K562 (cell line): ENCODE measurements at regions of chr2 and their contacts with region 1.

Region 1: DNA sequence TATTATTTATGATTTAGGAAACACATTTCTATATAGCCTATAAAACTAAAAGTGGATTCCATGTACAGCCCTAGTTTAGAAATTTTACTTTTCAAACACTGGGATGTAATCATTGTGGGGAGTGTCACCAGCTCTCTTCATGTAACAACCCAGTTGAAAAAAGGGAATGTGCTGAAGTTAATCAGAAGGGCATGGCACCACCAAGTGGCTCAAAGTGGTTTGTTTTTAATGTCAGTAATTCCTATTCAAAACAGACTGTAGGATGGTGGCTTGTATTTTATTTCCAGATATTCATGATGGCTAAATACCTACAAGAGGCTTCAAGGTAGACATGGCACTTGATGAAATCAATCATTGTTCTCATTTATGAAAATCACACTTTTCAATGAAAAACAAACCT is 58.1 kb upstream of the TMEM182 start:
- DNase-seq: peak; percentile 23 to 58 (median 43)
- ATAC-seq: peak; percentile 94
- H3K4me3 ChIP-seq: no peak overlapping the region
- H3K27ac ChIP-seq: no peak overlapping the region
- H3K4me1 ChIP-seq: peaks cover 0 to 5% of the 10 kb centered on the region in 2 experiments; a peak in 2 of 5 replicates
- H3K27me3 ChIP-seq: no peaks in the 10 kb centered on the region
- CTCF ChIP-seq: peak; percentile 58 to 85 (median 66)
- EP300 ChIP-seq: no peak
- POLR2A ChIP-seq: no peak
- RAD21 ChIP-seq: peak; percentile 89 to 90

Region 2: GRCh38 chr2:102473020-102473419 is 230.7 kb before region 1 on chr2 and contains the start of gene SLC9A4:
- CTCF ChIA-PET with region 1: interaction called, 8 read pairs
- POLR2A ChIA-PET with region 1: no interaction called
- in situ Hi-C with region 1: loop called (anchors 10 kb)
- intact Hi-C with region 1: loop called (anchors 1 kb)
- DNase-seq: peak; percentile 25 to 60 (median 53)
- ATAC-seq: peak; percentile 72
- H3K4me3 ChIP-seq: no peak within 1 kb of the TSS
- H3K27ac ChIP-seq: no peak within 1 kb of the TSS
- H3K4me1 ChIP-seq: no peaks in the 10 kb centered on the region
- H3K27me3 ChIP-seq: peaks cover 0 to 5% of the 10 kb centered on the region in 2 experiments; a peak in 2 of 5 replicates
- CTCF ChIP-seq: peak; percentile 59 to 82 (median 80)
- EP300 ChIP-seq: no peak
- POLR2A ChIP-seq: no peak
- RAD21 ChIP-seq: peak; percentile 68 to 80
- polyA plus RNA-seq, gene SLC9A4: 0.15 TPM in 1 of 2 experiments, not detected in the other

Region 3: DNA sequence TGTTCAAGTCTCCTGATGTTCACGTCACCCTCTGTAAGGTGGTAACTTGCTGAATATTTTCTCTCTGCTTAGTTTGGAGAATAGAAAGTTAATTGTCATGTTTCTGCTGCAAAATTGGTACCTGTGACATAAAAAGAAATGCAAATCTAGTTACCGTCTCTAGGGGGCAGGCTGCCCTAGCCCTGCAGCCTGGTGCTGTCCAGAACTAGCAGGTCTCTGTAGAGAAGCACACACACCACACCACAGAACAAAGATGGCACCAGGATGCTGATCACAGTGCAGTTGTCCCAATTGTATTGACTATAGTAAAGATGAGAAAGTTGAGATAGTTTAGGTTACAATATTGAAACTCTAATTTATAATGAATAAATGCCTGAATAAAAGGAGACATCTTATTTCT is 183.7 kb before region 1 on chr2:
- CTCF ChIA-PET with region 1: interaction called, 16 read pairs
- POLR2A ChIA-PET with region 1: no interaction called
- in situ Hi-C with region 1: loop called (anchors 5 kb)
- intact Hi-C with region 1: loop called (anchors 1 kb)
- DNase-seq: peak; percentile 24 to 70 (median 42)
- ATAC-seq: peak; percentile 92
- H3K4me3 ChIP-seq: no peak overlapping the region
- H3K27ac ChIP-seq: no peak overlapping the region
- H3K4me1 ChIP-seq: no peaks in the 10 kb centered on the region
- H3K27me3 ChIP-seq: peaks cover 5 to 9% of the 10 kb centered on the region in 2 experiments; a peak in 2 of 5 replicates
- CTCF ChIP-seq: peak; percentile 75 to 91 (median 84)
- EP300 ChIP-seq: no peak
- POLR2A ChIP-seq: no peak
- RAD21 ChIP-seq: peak; percentile 73 to 89

Region 4: GRCh38 chr2:102637358-102637757 is 66.4 kb before region 1 on chr2:
- CTCF ChIA-PET with region 1: no interaction called
- POLR2A ChIA-PET with region 1: no interaction called
- in situ Hi-C with region 1: no loop called
- intact Hi-C with region 1: loop called (anchors 5 kb)
- DNase-seq: no peak
- ATAC-seq: peak; percentile 3; the same call in 1 of the 3 replicates
- H3K4me3 ChIP-seq: no peak overlapping the region
- H3K27ac ChIP-seq: peak overlapping the region; percentile 86; the same call in 2 of the 3 replicates
- H3K4me1 ChIP-seq: peaks cover 12 to 47% of the 10 kb centered on the region in 2 experiments
- H3K27me3 ChIP-seq: no peaks in the 10 kb centered on the region
- CTCF ChIP-seq: peak; percentile 10 to 29 (median 27); a peak in 2 of 6 replicates
- EP300 ChIP-seq: no peak
- POLR2A ChIP-seq: no peak
- RAD21 ChIP-seq: peak in 1 of 2 experiments; percentile 21; a peak in 2 of 4 replicates